Heart left ventricle (tissue), 16 donors: ENCODE measurements at regions of chr15 and their contacts with region 1.

Region 1: GRCh38 chr15:68335251-68335650 is 57.7 kb downstream of the FEM1B start:
- DNase-seq: peak in 2 of 5 donors; percentile 63 to 67
- ATAC-seq: peak; percentile 46 to 59 (median 58)
- H3K4me3 ChIP-seq: no peak overlapping the region
- H3K27ac ChIP-seq: peak overlapping the region; percentile 26 to 86 (median 51)
- H3K4me1 ChIP-seq: peaks cover 0 to 43% (median 21%) of the 10 kb centered on the region in 12 donors
- H3K27me3 ChIP-seq: no peaks in the 10 kb centered on the region
- CTCF ChIP-seq: no peak
- POLR2A ChIP-seq: no peak

Region 2: DNA sequence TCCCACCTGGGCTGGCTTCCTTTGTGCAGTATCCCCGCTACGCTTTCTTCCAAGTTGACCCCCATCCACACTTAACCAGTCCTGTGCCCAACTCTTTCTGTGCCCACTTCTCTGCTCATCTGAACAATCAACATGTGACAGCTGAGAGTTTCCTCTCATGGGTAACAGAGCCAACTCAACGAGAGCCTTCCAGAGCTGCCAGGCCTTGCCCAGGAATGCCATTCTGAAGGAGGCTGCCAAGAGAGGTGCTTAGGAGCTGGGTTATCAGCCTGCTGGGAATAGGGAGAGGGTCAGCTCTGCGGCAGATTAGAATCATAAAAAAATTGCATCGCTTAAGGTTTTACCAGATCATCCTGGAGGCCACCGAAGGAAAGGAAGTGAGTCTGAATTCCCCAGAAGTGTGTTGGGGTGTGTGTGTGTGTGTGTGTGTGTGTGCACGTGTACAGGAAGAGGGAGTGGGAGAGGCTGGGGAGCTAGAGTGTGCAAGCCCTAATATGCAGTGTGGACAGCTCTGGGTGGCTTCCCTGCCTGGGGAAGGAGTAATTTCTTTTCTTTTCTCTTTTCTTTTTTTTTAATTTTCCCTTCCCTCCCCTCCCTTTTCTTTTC is 30.0 kb after region 1 on chr15:
- intact Hi-C with region 1: loop called in 1 of 10 experiments (anchors 2 kb)
- DNase-seq: peak in 2 of 5 donors; percentile 65 to 68
- ATAC-seq: peak; percentile 67 to 74 (median 70)
- H3K4me3 ChIP-seq: no peak overlapping the region
- H3K27ac ChIP-seq: peak overlapping the region; percentile 24 to 91 (median 86)
- H3K4me1 ChIP-seq: peaks cover 24 to 89% (median 66%) of the 10 kb centered on the region in 12 donors
- H3K27me3 ChIP-seq: no peaks in the 10 kb centered on the region
- CTCF ChIP-seq: no peak
- POLR2A ChIP-seq: no peak

Region 3: DNA sequence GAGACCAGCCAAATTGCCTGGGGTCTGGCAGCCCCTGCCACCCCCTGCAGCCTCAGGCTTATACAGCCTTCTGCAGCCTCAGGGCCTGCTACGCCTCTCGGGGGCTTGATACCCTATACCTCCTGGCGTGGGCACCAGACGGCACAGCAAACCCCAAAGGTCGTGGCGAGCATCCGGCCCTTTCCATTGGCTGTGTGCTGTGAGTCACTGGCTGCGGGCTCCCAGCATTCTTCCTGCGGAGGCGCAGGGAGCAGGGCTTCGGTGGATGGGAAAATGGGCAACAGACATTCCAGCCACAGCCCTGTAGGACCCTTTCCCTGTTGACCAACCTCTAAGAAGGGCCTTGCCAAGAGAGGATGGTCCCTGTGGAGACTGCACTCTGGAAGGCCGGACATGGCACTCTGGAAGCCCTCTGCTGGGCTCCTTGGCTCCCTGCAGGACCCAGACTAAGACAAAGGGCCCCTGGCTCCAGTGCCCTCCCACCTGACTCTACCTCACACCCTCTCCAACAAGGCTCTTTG is 37.1 kb after region 1 on chr15:
- intact Hi-C with region 1: loop called in 1 of 10 experiments (anchors 2 kb)
- DNase-seq: peak in 3 of 5 donors; percentile 25 to 53 (median 29)
- ATAC-seq: peak; percentile 29 to 66 (median 58)
- H3K4me3 ChIP-seq: no peak overlapping the region
- H3K27ac ChIP-seq: no peak overlapping the region
- H3K4me1 ChIP-seq: peaks cover 6 to 35% (median 16%) of the 10 kb centered on the region in 12 donors
- H3K27me3 ChIP-seq: no peaks in the 10 kb centered on the region
- CTCF ChIP-seq: peak; percentile 32 to 60 (median 46)
- POLR2A ChIP-seq: no peak